Caco-2 (cell line): ENCODE measurements at regions of chr9 and their contacts with region 1.

Region 1: GRCh38 chr9:98263482-98264357 is 8.3 kb upstream of the TBC1D2 start:
- DNase-seq: peak; percentile 85
- H3K4me3 ChIP-seq: no peak overlapping the region
- H3K4me3 Mint-ChIP-seq: no peak overlapping the region
- H3K27ac Mint-ChIP-seq: no peak overlapping the region
- H3K4me1 ChIP-seq: no peaks in the 10 kb centered on the region
- H3K4me1 Mint-ChIP-seq: peaks cover 17% of the 10 kb centered on the region
- H3K27me3 ChIP-seq: no peaks in the 10 kb centered on the region
- H3K27me3 Mint-ChIP-seq: no peaks in the 10 kb centered on the region
- CTCF ChIP-seq: peak; percentile 94 to 96

Region 2: GRCh38 chr9:97997330-97998276 is 266.1 kb before region 1 on chr9:
- CTCF ChIA-PET with region 1: no interaction called
- POLR2A ChIA-PET with region 1: no interaction called
- intact Hi-C with region 1: no loop called
- DNase-seq: no peak
- H3K4me3 ChIP-seq: no peak overlapping the region
- H3K4me3 Mint-ChIP-seq: no peak overlapping the region
- H3K27ac Mint-ChIP-seq: no peak overlapping the region
- H3K4me1 ChIP-seq: peaks cover 2% of the 10 kb centered on the region; the same call in 1 of the 2 replicates
- H3K4me1 Mint-ChIP-seq: peaks cover 7% of the 10 kb centered on the region
- H3K27me3 ChIP-seq: no peaks in the 10 kb centered on the region
- H3K27me3 Mint-ChIP-seq: no peaks in the 10 kb centered on the region
- CTCF ChIP-seq: no peak

Region 3: DNA sequence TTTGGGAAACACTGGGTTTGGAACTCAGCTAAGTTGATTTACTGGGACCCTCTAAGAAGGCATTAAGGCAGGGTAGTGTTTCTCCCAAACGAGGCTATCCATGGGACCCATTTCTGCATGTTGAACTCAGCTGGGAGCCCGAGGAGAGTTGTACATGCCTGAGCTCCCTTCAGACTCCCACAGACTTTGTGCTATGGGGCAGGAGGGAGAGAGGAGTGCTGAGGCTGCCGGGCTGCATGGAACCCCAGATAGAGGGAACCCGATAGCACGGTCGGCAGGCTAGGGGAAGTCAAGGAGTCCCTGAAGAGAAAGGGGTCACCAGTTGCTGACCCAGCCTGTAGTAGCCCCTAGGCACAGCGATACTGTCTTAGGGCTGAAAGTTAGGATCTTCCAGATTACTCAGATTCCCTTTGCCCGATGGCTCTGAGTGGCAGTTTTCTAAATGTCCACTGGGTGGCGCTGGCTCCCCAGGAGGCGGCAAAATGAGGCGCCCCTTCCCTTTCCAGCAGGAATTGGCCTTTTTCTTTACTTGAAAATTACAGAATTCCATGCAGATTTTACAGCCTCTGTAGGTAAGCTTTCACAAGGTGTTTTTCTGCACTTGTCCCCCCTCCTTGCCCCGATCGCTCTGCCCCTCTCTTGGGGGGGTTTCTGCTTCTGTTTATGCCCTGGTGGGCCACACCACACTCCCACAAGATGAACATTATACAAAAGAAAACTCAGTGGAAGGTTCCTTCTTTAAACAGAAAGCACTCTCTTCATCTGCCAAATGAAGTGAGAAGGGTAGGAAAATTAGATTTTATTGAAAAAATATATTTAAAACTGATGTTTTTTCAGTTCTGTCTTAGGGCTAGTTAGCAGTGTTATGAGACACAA is 189.4 kb before region 1 on chr9:
- CTCF ChIA-PET with region 1: no interaction called
- POLR2A ChIA-PET with region 1: no interaction called
- intact Hi-C with region 1: loop called (anchors 1 kb)
- DNase-seq: peak; percentile 71 to 80
- H3K4me3 ChIP-seq: no peak overlapping the region
- H3K4me3 Mint-ChIP-seq: no peak overlapping the region
- H3K27ac Mint-ChIP-seq: peak overlapping the region; percentile 27
- H3K4me1 ChIP-seq: peaks cover 16% of the 10 kb centered on the region
- H3K4me1 Mint-ChIP-seq: peaks cover 12% of the 10 kb centered on the region
- H3K27me3 ChIP-seq: no peaks in the 10 kb centered on the region
- H3K27me3 Mint-ChIP-seq: no peaks in the 10 kb centered on the region
- CTCF ChIP-seq: peak; percentile 90 to 96

Region 4: DNA sequence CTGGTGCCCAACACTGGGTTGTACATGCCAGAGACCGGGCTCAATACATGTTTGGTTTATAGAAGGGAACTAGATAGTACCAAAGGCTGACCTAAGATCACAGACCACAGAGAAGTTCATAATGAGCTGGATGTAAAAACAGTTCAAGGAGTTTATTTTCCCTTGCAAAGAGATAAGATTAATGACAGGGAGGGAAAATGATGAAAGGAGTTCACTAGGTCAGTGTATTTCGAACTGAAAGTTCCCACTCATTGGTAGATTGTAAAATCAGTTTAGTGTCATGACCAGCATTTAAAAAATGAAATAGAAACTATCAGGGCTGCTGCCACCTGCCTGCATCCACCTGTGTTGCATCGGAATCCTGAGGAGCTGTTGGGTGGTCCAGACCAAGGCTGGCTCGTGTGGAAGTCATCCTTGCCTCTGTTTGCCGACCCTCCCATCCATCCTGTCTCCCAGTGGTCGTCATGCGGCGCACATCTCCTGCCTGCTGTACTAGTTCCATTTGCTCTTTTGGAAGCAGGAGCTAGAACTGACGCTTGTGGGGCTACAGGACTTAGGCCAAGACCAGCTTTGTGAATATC is 29.4 kb before region 1 on chr9:
- CTCF ChIA-PET with region 1: no interaction called
- POLR2A ChIA-PET with region 1: no interaction called
- intact Hi-C with region 1: loop called (anchors 1 kb)
- DNase-seq: no peak
- H3K4me3 ChIP-seq: no peak overlapping the region
- H3K4me3 Mint-ChIP-seq: no peak overlapping the region
- H3K27ac Mint-ChIP-seq: no peak overlapping the region
- H3K4me1 ChIP-seq: peaks cover 56% of the 10 kb centered on the region
- H3K4me1 Mint-ChIP-seq: peaks cover 26% of the 10 kb centered on the region
- H3K27me3 ChIP-seq: no peaks in the 10 kb centered on the region
- H3K27me3 Mint-ChIP-seq: no peaks in the 10 kb centered on the region
- CTCF ChIP-seq: peak; percentile 21 to 44

Region 5: DNA sequence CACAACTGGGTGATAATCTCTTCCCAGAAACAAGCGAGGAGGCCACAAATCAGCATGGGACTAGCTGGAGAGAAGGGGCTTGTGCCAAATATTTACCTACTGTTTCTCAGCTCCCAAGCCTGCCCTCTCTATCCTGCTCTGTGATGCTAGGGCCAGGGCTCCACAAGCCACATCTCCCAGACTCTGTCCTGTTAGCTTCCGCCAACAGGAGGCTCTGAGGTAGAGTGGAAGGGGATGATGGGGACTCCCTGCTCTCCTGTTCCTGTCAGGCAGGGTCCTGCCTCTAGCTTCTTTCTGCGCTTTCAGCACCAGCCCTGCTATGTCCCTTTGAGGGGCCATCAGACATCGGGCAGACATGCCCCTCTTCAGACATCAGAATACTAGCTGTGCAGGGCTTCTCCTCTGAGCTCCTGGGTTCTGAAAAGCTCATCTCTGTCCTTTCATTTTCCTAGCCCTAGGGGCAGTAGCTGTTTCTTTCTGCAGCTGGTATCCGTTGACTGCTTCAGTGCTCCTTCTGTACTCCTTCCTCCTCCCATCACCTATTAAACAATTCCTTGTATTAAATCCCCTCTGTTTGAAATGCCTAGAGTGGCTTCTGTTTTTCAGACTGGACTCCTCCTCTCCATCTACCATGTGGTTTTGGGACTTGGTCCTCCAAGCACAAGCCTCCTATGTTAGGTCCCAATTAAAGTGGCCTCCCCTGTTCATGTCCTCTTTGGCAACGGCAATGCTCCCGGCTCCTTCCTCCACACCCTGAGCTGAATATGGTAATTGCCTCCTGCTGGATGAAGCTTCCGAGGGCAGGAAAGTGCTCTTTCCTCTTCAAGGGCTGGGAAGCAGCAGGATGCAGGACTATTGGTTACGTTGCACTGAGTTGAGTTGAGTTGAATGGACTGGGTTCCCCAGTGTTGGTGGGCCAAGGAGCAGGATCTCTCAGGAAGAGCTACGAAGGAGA is 152.9 kb after region 1 on chr9:
- CTCF ChIA-PET with region 1: no interaction called
- POLR2A ChIA-PET with region 1: no interaction called
- intact Hi-C with region 1: no loop called
- DNase-seq: no peak
- H3K4me3 ChIP-seq: no peak overlapping the region
- H3K4me3 Mint-ChIP-seq: no peak overlapping the region
- H3K27ac Mint-ChIP-seq: no peak overlapping the region
- H3K4me1 ChIP-seq: no peaks in the 10 kb centered on the region
- H3K4me1 Mint-ChIP-seq: no peaks in the 10 kb centered on the region
- H3K27me3 ChIP-seq: no peaks in the 10 kb centered on the region
- H3K27me3 Mint-ChIP-seq: peaks cover 3% of the 10 kb centered on the region
- CTCF ChIP-seq: no peak